ENCODE measurements at regions of chr10 and their contacts with region 1.

Region 1: DNA sequence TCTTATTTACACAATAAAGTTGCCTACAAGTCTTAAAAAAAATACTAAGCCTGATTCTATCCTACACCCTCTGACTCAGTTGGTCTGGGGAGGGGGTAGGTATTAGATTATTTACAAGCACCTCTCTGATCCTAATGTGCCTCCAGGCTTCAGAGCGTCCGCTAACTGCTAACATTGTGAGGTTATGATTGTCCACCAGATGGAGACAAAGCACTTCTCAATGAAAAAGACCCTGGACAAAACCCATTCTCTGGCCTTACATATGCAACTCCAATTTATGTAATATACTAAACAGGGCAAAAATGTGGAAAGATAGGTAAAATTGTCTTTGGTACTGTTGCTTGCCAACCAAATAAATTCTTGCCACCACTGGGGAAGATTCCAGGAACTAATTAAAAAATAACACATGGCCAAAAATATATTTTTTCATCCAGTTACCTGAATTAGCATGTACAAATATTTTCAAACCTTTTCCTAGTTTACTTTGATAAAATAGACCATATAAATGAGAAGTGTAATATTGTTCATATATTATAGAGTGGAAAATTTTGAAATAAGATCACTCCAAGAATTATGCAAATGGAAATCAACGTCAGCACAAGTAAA is 92.4 kb downstream of the KIF20B start:
- DNase-seq: peak in 2 of 5 donors; percentile 21 to 24
- ATAC-seq: peak in 3 of 4 donors; percentile 73 to 74 (median 74)
- H3K4me3 ChIP-seq: no peak overlapping the region
- H3K27ac ChIP-seq: no peak overlapping the region
- H3K4me1 ChIP-seq: no peaks in the 10 kb centered on the region
- H3K27me3 ChIP-seq: no peaks in the 10 kb centered on the region
- CTCF ChIP-seq: peak; percentile 61 to 83 (median 74)
- POLR2A ChIP-seq: no peak

Region 2: DNA sequence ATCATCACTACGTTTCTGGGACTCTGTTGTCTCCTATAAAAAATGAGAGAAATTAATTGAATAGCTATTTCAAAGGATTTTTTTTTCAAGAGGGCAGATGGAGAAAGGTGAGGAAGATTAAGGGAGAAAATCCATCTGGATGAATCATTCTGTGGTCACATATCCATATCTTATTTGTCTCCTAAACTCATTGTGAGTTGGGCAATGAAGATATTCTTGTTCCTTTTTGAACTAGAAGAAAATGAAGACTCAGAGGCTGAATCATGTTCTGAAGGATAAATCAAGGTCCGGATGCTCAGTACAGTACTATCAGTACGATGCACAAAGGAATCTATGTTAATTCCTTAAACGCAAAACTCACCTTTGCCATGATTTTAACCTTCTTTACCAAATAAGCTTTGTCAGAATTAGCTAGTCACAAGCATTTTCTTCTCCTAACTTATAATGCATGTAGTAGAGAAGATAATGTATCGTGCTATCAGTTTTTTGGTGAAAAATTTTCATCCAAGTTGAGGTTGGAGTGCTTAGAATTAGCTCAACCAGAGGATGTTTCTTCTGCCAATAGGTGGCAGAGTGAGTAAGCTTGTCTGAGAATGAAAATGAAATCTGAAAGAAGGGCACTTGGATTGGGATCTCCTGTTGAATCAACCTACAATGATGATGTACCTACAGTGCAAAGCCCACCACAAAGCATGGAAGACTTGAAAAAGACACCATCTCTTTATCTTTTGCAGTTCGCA is 354.5 kb after region 1 on chr10:
- intact Hi-C with region 1: loop called in 1 of 10 experiments (anchors 10 kb)
- DNase-seq: no peak
- ATAC-seq: no peak
- H3K4me3 ChIP-seq: no peak overlapping the region
- H3K27ac ChIP-seq: no peak overlapping the region
- H3K4me1 ChIP-seq: no peaks in the 10 kb centered on the region
- H3K27me3 ChIP-seq: no peaks in the 10 kb centered on the region
- CTCF ChIP-seq: peak in 8 of 12 donors; percentile 6 to 49 (median 32)
- POLR2A ChIP-seq: no peak

Region 3: DNA sequence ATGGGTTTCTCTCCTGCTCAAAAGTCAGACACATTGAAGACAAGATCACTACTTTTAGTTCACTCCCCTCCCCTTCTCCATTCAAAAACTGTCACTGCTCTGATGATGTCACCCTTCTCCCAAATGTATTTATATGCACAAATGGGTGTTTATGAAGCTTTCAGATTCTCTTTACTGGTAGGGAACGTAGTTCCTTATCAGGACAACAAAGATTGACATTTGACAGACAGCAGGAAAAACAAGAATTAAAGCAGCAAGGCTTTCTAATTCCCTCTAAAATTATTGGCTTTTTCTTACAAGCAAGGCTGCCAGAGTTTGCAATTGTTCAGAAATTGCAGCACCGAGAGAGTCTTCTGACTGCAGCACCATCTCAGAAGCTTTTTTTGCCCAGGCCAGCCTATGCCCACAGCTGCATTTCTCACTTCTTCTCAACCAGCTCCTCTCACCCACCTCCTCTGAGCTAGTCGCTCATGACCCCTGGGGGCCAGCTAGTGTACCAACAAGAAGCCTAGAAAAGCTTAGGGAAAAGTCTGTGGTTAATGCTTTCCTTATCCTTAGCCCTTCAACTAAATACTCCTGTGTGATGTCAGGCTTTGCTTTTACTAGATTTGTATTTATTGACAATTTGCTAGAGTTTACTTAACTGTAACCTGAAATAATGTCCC is 799.0 kb after region 1 on chr10:
- intact Hi-C with region 1: loop called in 1 of 10 experiments (anchors 10 kb)
- DNase-seq: peak in 3 of 5 donors; percentile 20 to 36 (median 27)
- ATAC-seq: peak in 3 of 4 donors; percentile 41 to 60 (median 52)
- H3K4me3 ChIP-seq: no peak overlapping the region
- H3K27ac ChIP-seq: no peak overlapping the region
- H3K4me1 ChIP-seq: peaks cover 0 to 12% (median 0%) of the 10 kb centered on the region in 12 donors
- H3K27me3 ChIP-seq: no peaks in the 10 kb centered on the region
- CTCF ChIP-seq: peak in 8 of 12 donors; percentile 8 to 47 (median 28)
- POLR2A ChIP-seq: no peak

Region 4: GRCh38 chr10:90787393-90788198 is 993.8 kb after region 1 on chr10:
- intact Hi-C with region 1: loop called (anchors 1 to 5 kb)
- DNase-seq: no peak
- ATAC-seq: no peak
- H3K4me3 ChIP-seq: no peak overlapping the region
- H3K27ac ChIP-seq: no peak overlapping the region
- H3K4me1 ChIP-seq: peaks cover 0 to 4% (median 0%) of the 10 kb centered on the region in 12 donors
- H3K27me3 ChIP-seq: peaks cover 0 to 13% (median 0%) of the 10 kb centered on the region in 9 donors
- CTCF ChIP-seq: peak; percentile 59 to 82 (median 69)
- POLR2A ChIP-seq: no peak

Region 5: GRCh38 chr10:90857635-90858460 is 1064.1 kb after region 1 on chr10 and contains the start of gene HTR7:
- intact Hi-C with region 1: loop called in 6 of 10 experiments (anchors 5 to 10 kb)
- DNase-seq: peak; percentile 51 to 85 (median 63)
- ATAC-seq: peak in 3 of 4 donors; percentile 66 to 91 (median 88)
- H3K4me3 ChIP-seq: peak within 1 kb of the TSS; percentile 45 to 83 (median 64)
- H3K27ac ChIP-seq: peak within 1 kb of the TSS in 5 of 12 donors; percentile 17 to 79 (median 60)
- H3K4me1 ChIP-seq: peaks cover 0 to 23% (median 5%) of the 10 kb centered on the region in 12 donors
- H3K27me3 ChIP-seq: peaks cover 12 to 46% (median 43%) of the 10 kb centered on the region in 9 donors
- CTCF ChIP-seq: peak in 11 of 12 donors; percentile 24 to 75 (median 61)
- POLR2A ChIP-seq: no peak
- total RNA-seq, gene HTR7: 0.10 to 0.66 (median 0.26) TPM in 6 of 9 donors, not detected in the others

Region 6: DNA sequence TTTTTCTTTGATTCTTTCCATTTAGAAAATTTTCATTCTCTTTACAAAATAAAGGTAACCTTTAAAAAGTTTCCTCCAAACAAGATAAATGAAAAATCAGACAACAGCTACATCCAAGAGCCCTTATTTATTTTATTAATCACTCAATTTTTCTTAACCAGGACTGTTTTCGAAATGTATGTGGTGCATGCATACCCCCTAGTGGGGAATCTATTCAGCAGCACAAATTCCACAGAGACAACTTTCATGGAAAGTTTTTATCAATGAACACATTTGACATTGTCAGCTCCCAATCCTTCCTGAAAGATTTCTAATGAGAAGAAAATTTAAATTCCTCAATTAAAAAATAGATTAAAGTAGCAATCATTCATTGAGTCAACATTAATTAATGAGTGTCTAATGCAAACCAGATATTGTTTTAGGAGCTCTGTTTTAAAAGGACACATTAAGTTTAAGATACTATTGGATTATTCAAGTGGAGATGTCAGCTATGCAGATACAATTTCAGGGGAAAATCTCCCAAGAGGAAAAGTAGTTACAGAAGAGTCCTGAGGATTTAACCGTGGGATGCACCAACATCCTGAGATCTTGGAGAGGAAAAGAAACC is 1069.3 kb after region 1 on chr10:
- intact Hi-C with region 1: loop called in 7 of 10 experiments (anchors 5 to 10 kb)
- DNase-seq: no peak
- ATAC-seq: no peak
- H3K4me3 ChIP-seq: no peak overlapping the region
- H3K27ac ChIP-seq: no peak overlapping the region
- H3K4me1 ChIP-seq: peaks cover 0 to 12% (median 0%) of the 10 kb centered on the region in 12 donors
- H3K27me3 ChIP-seq: peaks cover 0 to 12% (median 0%) of the 10 kb centered on the region in 9 donors
- CTCF ChIP-seq: peak; percentile 36 to 67 (median 56)
- POLR2A ChIP-seq: no peak

Region 7: GRCh38 chr10:90871766-90872647 is 1078.3 kb after region 1 on chr10 and contains the start of gene RPP30:
- intact Hi-C with region 1: loop called in 6 of 10 experiments (anchors 5 to 10 kb)
- DNase-seq: peak; percentile 83 to 92 (median 86)
- ATAC-seq: peak; percentile 97 to 99 (median 98)
- H3K4me3 ChIP-seq: peak within 1 kb of the TSS; percentile 66 to 98 (median 80)
- H3K27ac ChIP-seq: peak within 1 kb of the TSS; percentile 24 to 78 (median 64)
- H3K4me1 ChIP-seq: peaks cover 0 to 27% (median 14%) of the 10 kb centered on the region in 12 donors
- H3K27me3 ChIP-seq: no peaks in the 10 kb centered on the region
- CTCF ChIP-seq: no peak
- POLR2A ChIP-seq: peak in 1 of 2 donors; percentile 21
- total RNA-seq, gene RPP30: 26.4 to 39.9 (median 29.7) TPM

Measured in heart left ventricle (tissue), 16 donors.